CD4-positive, alpha-beta T cell (primary cell): ENCODE measurements at regions of chr1 and their contacts with region 1.

Region 1: DNA sequence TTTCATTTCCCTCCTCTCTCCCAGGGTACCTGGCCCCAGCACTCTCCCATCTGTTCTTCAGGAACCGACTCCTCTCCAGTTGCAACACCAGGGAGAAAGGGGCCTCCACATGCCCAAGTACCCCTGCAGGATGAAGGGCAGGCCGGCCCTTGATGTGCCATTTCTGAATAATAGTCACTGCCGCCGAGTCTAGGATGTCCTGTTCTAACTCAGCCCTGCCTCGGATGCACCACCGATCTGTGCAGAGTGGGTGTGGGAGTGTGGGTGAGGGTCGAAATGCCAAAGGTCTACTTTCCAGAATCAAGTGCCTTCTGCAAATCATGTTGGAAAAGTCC is 25.4 kb upstream of the SPSB1 start:
- DNase-seq: no peak
- ATAC-seq: no peak
- H3K4me3 ChIP-seq: no peak overlapping the region
- H3K4me3 Mint-ChIP-seq: no peak overlapping the region
- H3K27ac ChIP-seq: no peak overlapping the region
- H3K27ac Mint-ChIP-seq: no peak overlapping the region
- H3K4me1 ChIP-seq: peaks cover 4% of the 10 kb centered on the region
- H3K4me1 Mint-ChIP-seq: peaks cover 7% of the 10 kb centered on the region
- H3K27me3 ChIP-seq: no peaks in the 10 kb centered on the region
- H3K27me3 Mint-ChIP-seq: no peaks in the 10 kb centered on the region
- CTCF ChIP-seq: no peak

Region 2: GRCh38 chr1:9128520-9129265 is 138.6 kb before region 1 on chr1 and contains the start of gene GPR157:
- CTCF ChIA-PET with region 1: no interaction called
- POLR2A ChIA-PET with region 1: no interaction called
- intact Hi-C with region 1: no loop called
- DNase-seq: peak; percentile 65 to 93 (median 81)
- ATAC-seq: peak; percentile 86
- H3K4me3 ChIP-seq: peak within 1 kb of the TSS; percentile 70
- H3K4me3 Mint-ChIP-seq: peak within 1 kb of the TSS; percentile 91
- H3K27ac ChIP-seq: peak within 1 kb of the TSS; percentile 56
- H3K27ac Mint-ChIP-seq: peak within 1 kb of the TSS; percentile 70
- H3K4me1 ChIP-seq: peaks cover 25% of the 10 kb centered on the region
- H3K4me1 Mint-ChIP-seq: peaks cover 40% of the 10 kb centered on the region
- H3K27me3 ChIP-seq: no peaks in the 10 kb centered on the region
- H3K27me3 Mint-ChIP-seq: no peaks in the 10 kb centered on the region
- CTCF ChIP-seq: no peak
- total RNA-seq, gene GPR157: 2.1 to 5.1 TPM

Region 3: DNA sequence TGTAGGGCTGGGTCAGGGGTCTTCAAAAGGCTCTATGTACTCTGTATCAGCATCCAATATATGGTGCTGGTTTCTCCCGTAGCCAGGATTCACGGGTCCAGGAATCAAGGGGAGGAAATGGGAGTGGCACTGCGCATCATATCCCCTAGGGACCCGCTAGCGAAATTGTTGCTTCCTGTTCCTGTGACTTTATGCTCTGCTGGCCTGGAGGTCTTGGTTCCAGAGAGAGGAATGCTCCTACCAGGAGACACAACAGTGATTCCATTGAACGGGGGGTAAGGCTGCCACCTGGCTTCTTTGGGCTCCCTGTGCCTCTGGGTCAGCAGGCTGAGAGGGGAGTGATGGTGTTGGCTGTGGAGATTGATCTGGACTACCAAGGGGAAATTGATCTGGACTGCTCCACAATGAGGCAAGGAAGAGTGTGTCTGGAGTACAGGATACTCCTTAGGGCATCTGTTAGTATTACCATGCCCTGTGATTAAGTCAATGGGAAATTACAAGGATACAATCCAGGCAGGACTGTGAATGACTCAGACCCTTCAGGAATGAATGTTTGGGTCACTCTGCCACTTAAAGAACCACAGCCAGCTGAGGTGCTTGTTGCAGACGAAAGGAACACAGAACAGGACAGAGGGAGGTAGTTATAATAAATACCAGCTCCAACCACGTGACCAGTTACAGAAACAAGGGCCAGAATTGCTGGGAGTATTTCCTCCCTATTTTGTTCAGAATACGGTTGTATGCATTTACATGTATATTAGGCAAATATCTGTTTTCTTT is 35.6 kb after region 1 on chr1:
- CTCF ChIA-PET with region 1: no interaction called
- POLR2A ChIA-PET with region 1: no interaction called
- intact Hi-C with region 1: no loop called
- DNase-seq: no peak
- ATAC-seq: no peak
- H3K4me3 ChIP-seq: no peak overlapping the region
- H3K4me3 Mint-ChIP-seq: no peak overlapping the region
- H3K27ac ChIP-seq: no peak overlapping the region
- H3K27ac Mint-ChIP-seq: no peak overlapping the region
- H3K4me1 ChIP-seq: peaks cover 9% of the 10 kb centered on the region
- H3K4me1 Mint-ChIP-seq: peaks cover 39% of the 10 kb centered on the region
- H3K27me3 ChIP-seq: no peaks in the 10 kb centered on the region
- H3K27me3 Mint-ChIP-seq: no peaks in the 10 kb centered on the region
- CTCF ChIP-seq: no peak

Region 4: DNA sequence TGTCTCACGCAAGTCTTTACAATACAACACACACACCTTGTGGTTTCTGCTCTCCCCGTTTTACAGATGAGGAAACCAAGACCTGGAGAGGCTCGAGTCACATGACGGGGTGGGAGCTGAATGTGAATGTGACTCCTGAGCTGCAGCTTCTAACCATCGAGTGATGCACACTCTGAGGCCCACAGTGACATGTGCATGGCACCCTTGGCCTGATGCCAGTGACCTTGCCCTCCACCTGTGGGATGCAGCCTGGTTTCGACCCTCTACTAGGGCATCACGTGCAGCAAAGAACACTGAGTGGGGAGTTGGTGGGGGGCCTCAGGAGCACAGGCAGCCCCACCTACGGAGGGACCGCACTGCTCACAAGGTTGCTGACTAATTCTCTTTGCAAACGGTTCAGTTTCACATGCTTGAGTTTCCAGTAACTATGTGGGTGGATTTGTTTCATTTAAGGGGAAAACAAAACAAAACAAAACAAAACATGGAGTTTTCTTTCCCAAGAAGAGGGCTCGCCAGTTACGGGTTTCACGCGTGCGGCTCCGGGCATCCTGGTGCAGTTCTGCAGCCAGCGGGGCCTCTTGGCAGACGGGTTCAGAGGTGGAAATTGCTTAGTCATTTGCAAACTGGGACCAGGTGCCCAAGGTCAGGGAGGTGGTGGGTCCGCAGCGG is 48.2 kb after region 1 on chr1:
- CTCF ChIA-PET with region 1: no interaction called
- POLR2A ChIA-PET with region 1: no interaction called
- intact Hi-C with region 1: no loop called
- DNase-seq: peak in 2 of 14 experiments; percentile 15 to 22
- ATAC-seq: peak; percentile 35
- H3K4me3 ChIP-seq: no peak overlapping the region
- H3K4me3 Mint-ChIP-seq: peak overlapping the region; percentile 13
- H3K27ac ChIP-seq: no peak overlapping the region
- H3K27ac Mint-ChIP-seq: no peak overlapping the region
- H3K4me1 ChIP-seq: peaks cover 26% of the 10 kb centered on the region
- H3K4me1 Mint-ChIP-seq: peaks cover 26% of the 10 kb centered on the region
- H3K27me3 ChIP-seq: no peaks in the 10 kb centered on the region
- H3K27me3 Mint-ChIP-seq: no peaks in the 10 kb centered on the region
- CTCF ChIP-seq: no peak

Region 5: DNA sequence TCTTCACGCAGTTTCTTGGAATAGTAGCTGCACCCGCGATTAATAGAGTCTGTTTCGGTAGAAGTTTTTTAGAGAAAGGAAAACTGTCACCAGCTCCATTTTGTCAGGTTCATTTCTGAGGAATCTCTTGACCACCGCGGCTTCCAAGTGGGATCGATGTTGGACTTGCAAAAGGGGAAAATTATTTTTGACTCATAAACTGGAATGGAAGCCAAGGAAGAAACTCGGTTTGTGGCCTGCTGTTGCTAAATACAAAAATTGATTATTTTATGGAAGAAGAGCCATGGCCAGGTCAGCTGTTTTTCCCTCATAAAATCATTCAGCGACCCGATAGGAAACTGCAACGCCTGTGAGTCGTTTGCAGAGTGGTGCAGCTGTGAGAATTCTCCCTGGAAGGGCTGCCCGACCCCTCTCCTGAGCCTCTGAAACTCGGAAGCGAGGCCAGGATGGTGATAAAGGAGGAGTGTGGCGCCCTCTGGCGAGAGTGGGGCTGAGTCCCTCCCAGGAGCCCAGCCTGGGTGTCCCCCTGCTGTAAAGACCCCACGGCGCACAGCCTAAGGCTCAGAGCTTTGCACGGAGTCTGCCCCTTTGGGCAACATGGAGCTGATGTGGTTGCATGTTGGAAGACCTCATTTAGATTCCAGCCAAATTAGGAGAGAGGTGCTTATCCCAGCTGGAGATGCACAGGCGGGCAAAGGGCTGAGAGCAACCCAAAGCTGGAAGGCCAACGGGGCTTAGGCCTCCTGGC is 188.3 kb after region 1 on chr1:
- CTCF ChIA-PET with region 1: interaction called, 30 read pairs
- POLR2A ChIA-PET with region 1: no interaction called
- intact Hi-C with region 1: loop called (anchors 1 kb)
- DNase-seq: peak; percentile 52 to 84 (median 64)
- ATAC-seq: peak; percentile 70
- H3K4me3 ChIP-seq: no peak overlapping the region
- H3K4me3 Mint-ChIP-seq: no peak overlapping the region
- H3K27ac ChIP-seq: no peak overlapping the region
- H3K27ac Mint-ChIP-seq: no peak overlapping the region
- H3K4me1 ChIP-seq: peaks cover 3% of the 10 kb centered on the region
- H3K4me1 Mint-ChIP-seq: no peaks in the 10 kb centered on the region
- H3K27me3 ChIP-seq: no peaks in the 10 kb centered on the region
- H3K27me3 Mint-ChIP-seq: no peaks in the 10 kb centered on the region
- CTCF ChIP-seq: peak; percentile 87

Region 6: DNA sequence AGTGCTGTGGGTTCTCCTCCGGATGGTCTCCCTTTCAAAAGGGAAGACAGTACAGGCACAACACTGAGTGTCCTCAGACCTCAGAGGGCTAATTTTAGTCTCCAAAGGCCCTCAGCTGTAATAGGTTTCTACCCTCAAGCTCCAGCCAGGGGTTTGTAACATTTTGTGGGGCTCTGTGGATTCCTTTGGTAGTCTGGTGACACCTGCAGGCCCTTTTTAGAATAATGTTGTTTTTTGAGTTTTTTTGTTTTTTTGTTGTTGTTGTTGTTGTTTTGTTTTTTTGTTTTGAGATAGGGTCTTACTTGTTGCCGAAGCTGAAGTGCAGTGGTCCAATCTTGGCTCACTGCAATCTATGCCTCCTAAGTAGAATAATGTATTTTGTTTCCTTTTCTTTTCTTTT is 306.4 kb after region 1 on chr1:
- CTCF ChIA-PET with region 1: no interaction called
- POLR2A ChIA-PET with region 1: no interaction called
- intact Hi-C with region 1: loop called in 1 of 2 experiments (anchors 2 kb)
- DNase-seq: peak in 2 of 14 experiments; percentile 22 to 45
- ATAC-seq: no peak
- H3K4me3 ChIP-seq: no peak overlapping the region
- H3K4me3 Mint-ChIP-seq: no peak overlapping the region
- H3K27ac ChIP-seq: no peak overlapping the region
- H3K27ac Mint-ChIP-seq: no peak overlapping the region
- H3K4me1 ChIP-seq: no peaks in the 10 kb centered on the region
- H3K4me1 Mint-ChIP-seq: no peaks in the 10 kb centered on the region
- H3K27me3 ChIP-seq: no peaks in the 10 kb centered on the region
- H3K27me3 Mint-ChIP-seq: no peaks in the 10 kb centered on the region
- CTCF ChIP-seq: no peak